CD8-positive, alpha-beta T cell (primary cell): ENCODE measurements at regions of chr6 and their contacts with region 1.

Region 1: DNA sequence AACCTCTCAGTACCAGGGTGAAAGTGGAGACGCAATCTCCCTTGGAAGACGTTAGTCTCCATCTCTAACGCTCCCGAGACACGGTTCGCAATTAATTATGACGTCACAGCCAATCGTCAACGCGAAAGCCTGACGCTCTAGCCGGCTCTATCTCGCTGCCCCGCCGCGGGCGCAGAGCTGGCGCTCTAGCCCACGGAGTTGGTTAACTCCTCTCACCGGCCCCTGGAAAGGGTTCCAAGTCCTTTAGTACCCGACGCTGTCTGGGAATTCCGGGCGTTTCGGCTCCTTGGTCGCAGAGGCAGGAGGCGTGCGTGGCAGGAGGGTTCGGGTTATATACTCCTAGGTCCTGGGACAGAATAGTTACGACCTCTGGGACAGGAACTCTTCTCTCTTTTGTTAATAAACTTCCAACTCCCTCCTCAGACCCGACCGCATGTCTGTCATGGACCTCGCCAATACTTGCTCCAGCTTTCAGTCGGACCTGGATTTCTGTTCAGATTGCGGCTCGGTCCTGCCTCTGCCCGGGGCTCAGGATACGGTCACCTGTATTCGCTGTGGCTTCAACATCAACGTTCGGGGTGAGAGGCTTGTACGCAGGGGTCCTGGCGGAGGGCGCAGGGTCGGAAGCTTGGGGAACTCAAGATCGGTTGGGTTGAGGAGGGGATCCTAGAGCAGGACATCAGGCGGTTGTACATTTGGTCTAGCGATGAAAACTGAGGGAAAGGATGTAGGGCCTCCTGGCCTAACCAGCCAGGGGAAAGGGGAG is at the start of gene POLR1H:
- DNase-seq: peak; percentile 68 to 96 (median 87)
- ATAC-seq: peak; percentile 87
- H3K4me3 ChIP-seq: peak within 1 kb of the TSS; percentile 82 to 87
- H3K4me3 Mint-ChIP-seq: peak within 1 kb of the TSS; percentile 97
- H3K27ac ChIP-seq: peak within 1 kb of the TSS; percentile 89 to 93
- H3K27ac Mint-ChIP-seq: peak within 1 kb of the TSS; percentile 99
- H3K4me1 ChIP-seq: peaks cover 29% of the 10 kb centered on the region
- H3K4me1 Mint-ChIP-seq: peaks cover 56% of the 10 kb centered on the region
- H3K27me3 ChIP-seq: no peaks in the 10 kb centered on the region
- H3K27me3 Mint-ChIP-seq: no peaks in the 10 kb centered on the region
- CTCF ChIP-seq: no peak
- total RNA-seq, gene POLR1H: 26.6 to 30.7 TPM

Region 2: DNA sequence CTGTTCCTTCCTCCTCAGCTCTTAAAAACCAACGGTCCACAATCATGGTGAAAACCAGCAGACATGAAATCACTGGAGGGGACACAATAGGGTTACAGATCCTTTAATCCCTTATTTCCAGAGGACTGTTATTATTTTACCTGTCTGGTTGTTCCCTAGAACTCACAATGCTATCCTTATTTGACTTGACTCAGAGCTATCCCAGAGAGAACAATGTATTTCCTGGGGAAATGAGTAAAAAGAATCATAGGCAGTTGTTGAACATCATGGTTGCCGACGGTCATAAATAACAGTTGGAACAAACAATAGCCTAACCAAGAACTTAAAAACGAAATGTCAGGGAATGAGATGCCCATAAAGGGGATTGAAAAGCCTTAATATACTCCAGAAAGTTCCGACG is 595.0 kb before region 1 on chr6:
- CTCF ChIA-PET with region 1: no interaction called
- POLR2A ChIA-PET with region 1: no interaction called
- intact Hi-C with region 1: no loop called
- DNase-seq: no peak
- ATAC-seq: no peak
- H3K4me3 ChIP-seq: no peak overlapping the region
- H3K4me3 Mint-ChIP-seq: no peak overlapping the region
- H3K27ac ChIP-seq: no peak overlapping the region
- H3K27ac Mint-ChIP-seq: no peak overlapping the region
- H3K4me1 ChIP-seq: no peaks in the 10 kb centered on the region
- H3K4me1 Mint-ChIP-seq: no peaks in the 10 kb centered on the region
- H3K27me3 ChIP-seq: no peaks in the 10 kb centered on the region
- H3K27me3 Mint-ChIP-seq: peaks cover 16% of the 10 kb centered on the region
- CTCF ChIP-seq: no peak

Region 3: GRCh38 chr6:30075161-30075986 is 14.1 kb after region 1 on chr6 and contains the start of gene RNF39:
- CTCF ChIA-PET with region 1: interaction called, 5 read pairs
- POLR2A ChIA-PET with region 1: interaction called, 11 read pairs
- intact Hi-C with region 1: loop called in 1 of 2 experiments (anchors 1 kb)
- DNase-seq: peak in 2 of 9 experiments; percentile 39 to 46
- ATAC-seq: peak; percentile 50
- H3K4me3 ChIP-seq: peak within 1 kb of the TSS in 1 of 2 experiments; percentile 34
- H3K4me3 Mint-ChIP-seq: peak within 1 kb of the TSS; percentile 72
- H3K27ac ChIP-seq: no peak within 1 kb of the TSS
- H3K27ac Mint-ChIP-seq: no peak within 1 kb of the TSS
- H3K4me1 ChIP-seq: peaks cover 42% of the 10 kb centered on the region
- H3K4me1 Mint-ChIP-seq: peaks cover 41% of the 10 kb centered on the region
- H3K27me3 ChIP-seq: peaks cover 26 to 33% of the 10 kb centered on the region in 2 experiments
- H3K27me3 Mint-ChIP-seq: peaks cover 54% of the 10 kb centered on the region
- CTCF ChIP-seq: peak; percentile 25
- total RNA-seq, gene RNF39: not detected